K562 (cell line): ENCODE measurements at regions of chr20 and their contacts with region 1.

Region 1: DNA sequence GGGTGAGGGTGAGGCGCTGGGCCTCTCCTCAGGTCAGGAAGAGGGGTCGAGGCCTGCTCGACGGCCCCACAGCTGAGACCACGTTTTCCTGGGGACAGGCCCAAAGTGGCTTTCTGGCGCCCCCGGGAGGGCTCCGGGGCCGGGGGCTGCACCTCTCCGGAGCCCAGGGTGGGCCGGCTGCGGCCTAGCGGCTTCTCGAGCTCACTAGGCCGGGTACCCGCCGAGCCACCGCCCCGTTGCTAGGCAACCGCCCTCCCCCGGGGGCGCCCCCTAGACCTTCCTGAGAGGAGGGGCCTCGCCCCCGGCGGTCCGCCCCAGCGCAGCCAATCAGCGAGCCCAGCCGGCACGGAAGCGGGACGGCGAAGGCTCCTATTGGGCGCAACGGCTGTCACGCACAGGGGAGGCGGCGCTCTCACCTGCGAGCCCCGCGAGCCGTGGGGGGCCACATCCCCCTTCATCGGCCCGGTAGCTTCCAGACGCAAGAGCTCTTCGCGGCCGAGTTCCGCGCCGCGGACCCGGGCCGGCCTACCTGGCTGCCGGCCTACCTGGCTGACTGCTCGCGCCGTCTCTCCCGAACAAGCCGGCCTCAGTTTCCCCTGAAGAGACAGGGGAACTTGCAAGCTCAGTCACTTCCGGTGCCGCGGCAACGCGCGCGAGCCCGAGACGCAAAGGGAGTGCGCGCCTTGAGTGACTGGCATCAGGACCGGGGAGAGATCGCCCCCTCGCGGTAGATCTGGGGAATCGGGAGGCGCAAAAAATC is 831 bp upstream of the BCL2L1 start:
- DNase-seq: peak; percentile 99 to 100 (median 100)
- ATAC-seq: peak; percentile 94
- H3K4me3 ChIP-seq: peak overlapping the region; percentile 88
- H3K27ac ChIP-seq: peak overlapping the region; percentile 92
- H3K4me1 ChIP-seq: peaks cover 5 to 26% of the 10 kb centered on the region in 2 experiments; a peak in 3 of 5 replicates
- H3K27me3 ChIP-seq: no peaks in the 10 kb centered on the region
- CTCF ChIP-seq: peak; percentile 91 to 97 (median 96)
- EP300 ChIP-seq: peak; percentile 31; the same call in 1 of the 2 replicates
- POLR2A ChIP-seq: no peak; the same call in 1 of the 2 replicates
- RAD21 ChIP-seq: peak; percentile 95 to 97

Region 2: GRCh38 chr20:31560094-31560899 is 163.2 kb before region 1 on chr20:
- CTCF ChIA-PET with region 1: interaction called, 5 read pairs
- POLR2A ChIA-PET with region 1: no interaction called
- in situ Hi-C with region 1: no loop called
- intact Hi-C with region 1: loop called (anchors 2 kb)
- DNase-seq: peak; percentile 71 to 89 (median 76)
- ATAC-seq: peak; percentile 79
- H3K4me3 ChIP-seq: no peak overlapping the region
- H3K27ac ChIP-seq: peak overlapping the region; percentile 57
- H3K4me1 ChIP-seq: peaks cover 9 to 25% of the 10 kb centered on the region in 2 experiments; a peak in 4 of 5 replicates
- H3K27me3 ChIP-seq: no peaks in the 10 kb centered on the region
- CTCF ChIP-seq: peak; percentile 91 to 99 (median 95)
- EP300 ChIP-seq: peak; percentile 54
- POLR2A ChIP-seq: no peak
- RAD21 ChIP-seq: peak; percentile 64 to 76

Region 3: DNA sequence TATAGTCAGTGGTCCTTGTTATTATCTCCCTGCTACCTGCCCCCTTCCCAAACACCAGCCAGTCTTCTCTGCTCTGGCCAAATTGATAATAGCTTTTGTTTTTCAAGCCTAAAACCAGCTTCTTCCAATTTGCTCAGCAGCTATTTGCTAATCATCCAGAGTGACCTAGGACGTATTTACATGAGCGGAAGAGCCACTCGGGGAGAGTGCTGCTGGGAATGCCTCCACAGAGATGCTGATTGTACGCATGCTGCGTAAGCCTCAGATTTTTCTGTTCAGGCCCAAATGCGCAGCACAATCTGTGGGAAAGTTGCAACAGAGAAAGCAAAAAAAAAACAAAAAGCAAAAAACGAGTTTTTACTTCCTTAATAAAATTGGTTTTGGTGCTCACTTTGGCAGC is 142.8 kb before region 1 on chr20:
- CTCF ChIA-PET with region 1: no interaction called
- POLR2A ChIA-PET with region 1: no interaction called
- in situ Hi-C with region 1: no loop called
- intact Hi-C with region 1: no loop called
- DNase-seq: no peak
- ATAC-seq: no peak
- H3K4me3 ChIP-seq: no peak overlapping the region
- H3K27ac ChIP-seq: no peak overlapping the region
- H3K4me1 ChIP-seq: peaks cover 0 to 10% of the 10 kb centered on the region in 2 experiments; a peak in 2 of 5 replicates
- H3K27me3 ChIP-seq: no peaks in the 10 kb centered on the region
- CTCF ChIP-seq: no peak
- EP300 ChIP-seq: no peak
- POLR2A ChIP-seq: no peak
- RAD21 ChIP-seq: no peak

Region 4: DNA sequence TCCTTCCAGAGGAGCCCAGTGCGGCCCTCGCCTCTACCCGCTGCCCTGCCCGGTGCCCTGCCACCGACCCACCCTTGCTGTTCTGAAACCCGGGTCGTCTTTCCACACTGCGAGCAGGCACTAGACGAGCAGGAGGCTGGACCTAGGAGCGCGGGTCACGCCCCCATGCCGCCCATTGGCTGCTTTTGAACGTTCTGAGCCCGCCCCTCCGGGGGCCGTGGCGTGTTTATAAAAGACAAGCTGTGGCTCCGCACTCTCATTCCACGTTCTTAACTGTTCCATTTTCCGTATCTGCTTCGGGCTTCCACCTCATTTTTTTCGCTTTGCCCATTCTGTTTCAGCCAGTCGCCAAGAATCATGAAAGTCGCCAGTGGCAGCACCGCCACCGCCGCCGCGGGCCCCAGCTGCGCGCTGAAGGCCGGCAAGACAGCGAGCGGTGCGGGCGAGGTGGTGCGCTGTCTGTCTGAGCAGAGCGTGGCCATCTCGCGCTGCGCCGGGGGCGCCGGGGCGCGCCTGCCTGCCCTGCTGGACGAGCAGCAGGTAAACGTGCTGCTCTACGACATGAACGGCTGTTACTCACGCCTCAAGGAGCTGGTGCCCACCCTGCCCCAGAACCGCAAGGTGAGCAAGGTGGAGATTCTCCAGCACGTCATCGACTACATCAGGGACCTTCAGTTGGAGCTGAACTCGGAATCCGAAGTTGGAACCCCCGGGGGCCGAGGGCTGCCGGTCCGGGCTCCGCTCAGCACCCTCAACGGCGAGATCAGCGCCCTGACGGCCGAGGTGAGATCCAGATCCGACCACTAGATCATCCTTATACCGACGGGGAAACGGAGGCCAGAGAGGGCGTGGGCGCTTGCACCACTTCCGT is 118.2 kb before region 1 on chr20 and contains the start of gene ID1:
- CTCF ChIA-PET with region 1: no interaction called
- POLR2A ChIA-PET with region 1: interaction called, 11 read pairs
- in situ Hi-C with region 1: no loop called
- intact Hi-C with region 1: no loop called
- DNase-seq: peak; percentile 91 to 98 (median 94)
- ATAC-seq: peak; percentile 81
- H3K4me3 ChIP-seq: peak within 1 kb of the TSS; percentile 94
- H3K27ac ChIP-seq: peak within 1 kb of the TSS; percentile 85
- H3K4me1 ChIP-seq: peaks cover 28 to 56% of the 10 kb centered on the region in 2 experiments; a peak in 4 of 5 replicates
- H3K27me3 ChIP-seq: no peaks in the 10 kb centered on the region
- CTCF ChIP-seq: no peak
- EP300 ChIP-seq: peak; percentile 18; the same call in 1 of the 2 replicates
- POLR2A ChIP-seq: peak; percentile 100
- RAD21 ChIP-seq: no peak
- polyA plus RNA-seq, gene ID1: 1.4 to 4.4 TPM

Region 5: DNA sequence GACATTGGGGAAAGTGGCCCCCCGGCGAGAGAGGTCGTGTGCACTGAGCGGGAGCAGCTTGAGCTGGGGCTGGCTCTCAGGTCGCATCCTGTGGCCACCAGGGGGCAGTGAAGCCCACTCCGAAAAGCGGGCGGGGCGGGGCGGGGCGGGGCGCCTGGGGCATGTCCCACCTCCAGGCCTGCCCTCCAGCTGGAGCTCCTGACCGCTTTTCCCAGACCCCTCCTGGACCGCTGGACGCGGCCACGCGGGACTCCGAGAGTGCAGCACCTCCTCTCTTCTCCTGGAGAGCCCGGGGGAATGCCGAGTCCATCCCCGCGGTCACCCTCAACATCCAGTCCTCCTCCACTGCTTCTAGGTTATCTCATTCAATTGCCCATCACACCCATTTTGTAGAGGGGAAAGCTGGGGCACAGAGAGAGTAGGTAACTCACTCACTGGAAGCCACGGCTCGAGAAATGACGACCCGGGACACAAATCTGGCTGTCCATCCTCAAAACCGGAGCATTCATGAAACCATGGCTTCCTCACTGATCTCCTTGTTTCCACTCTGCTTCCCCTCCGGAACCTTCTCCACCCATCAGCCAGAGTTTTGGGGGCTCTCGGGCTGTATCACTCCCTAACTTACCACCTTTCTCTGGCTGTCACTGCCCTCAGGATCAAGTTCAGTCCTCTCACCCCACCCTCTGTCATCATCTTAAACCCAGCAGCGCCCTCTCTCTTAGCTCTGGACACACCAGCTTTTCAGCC is 61.7 kb before region 1 on chr20:
- CTCF ChIA-PET with region 1: interaction called, 66 read pairs
- POLR2A ChIA-PET with region 1: interaction called, 30 read pairs
- in situ Hi-C with region 1: loop called (anchors 10 kb)
- intact Hi-C with region 1: loop called (anchors 1 kb)
- DNase-seq: peak; percentile 90 to 95 (median 92)
- ATAC-seq: peak; percentile 88
- H3K4me3 ChIP-seq: peak overlapping the region; percentile 34
- H3K27ac ChIP-seq: peak overlapping the region; percentile 77
- H3K4me1 ChIP-seq: peaks cover 48 to 51% of the 10 kb centered on the region in 2 experiments
- H3K27me3 ChIP-seq: no peaks in the 10 kb centered on the region
- CTCF ChIP-seq: peak; percentile 66 to 84 (median 74)
- EP300 ChIP-seq: peak; percentile 49; the same call in 1 of the 2 replicates
- POLR2A ChIP-seq: peak; percentile 64
- RAD21 ChIP-seq: peak; percentile 55 to 63

Region 6: DNA sequence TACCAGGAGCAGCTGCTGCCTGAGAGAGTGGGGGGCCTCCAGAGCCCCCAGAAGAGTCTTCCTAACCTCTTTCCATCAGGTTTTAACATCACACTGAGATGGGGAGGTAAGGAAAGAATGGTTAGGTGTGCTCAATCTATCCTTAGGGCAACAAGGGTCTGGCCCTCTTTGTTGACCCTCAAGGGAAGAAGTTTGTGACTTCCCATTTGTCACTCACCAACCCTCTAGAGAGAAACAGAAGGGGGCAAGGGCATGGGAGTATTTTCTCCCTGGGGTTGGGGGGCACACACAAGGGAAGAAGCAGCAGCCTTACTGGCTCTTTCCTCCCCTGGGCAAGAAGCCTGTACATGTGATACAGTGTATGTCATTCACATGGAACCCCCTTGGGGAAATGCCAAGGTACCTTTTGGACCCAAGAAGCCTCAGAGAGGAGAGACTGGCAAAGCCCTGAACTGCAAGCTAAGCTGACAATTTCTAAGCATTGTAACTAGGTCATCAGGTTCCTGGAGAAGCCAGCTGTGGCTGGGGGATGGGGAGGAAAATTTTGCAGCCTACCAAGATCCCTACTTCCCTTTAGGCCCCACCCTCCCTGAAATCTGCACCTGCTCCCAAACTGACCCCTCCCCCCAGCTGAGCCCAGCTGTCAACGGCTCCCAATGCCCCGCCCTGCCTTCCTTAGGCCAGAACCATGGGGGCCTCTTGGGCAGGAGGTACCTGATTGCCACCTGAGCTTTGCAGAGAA is 15.3 kb before region 1 on chr20:
- CTCF ChIA-PET with region 1: no interaction called
- POLR2A ChIA-PET with region 1: interaction called, 8 read pairs
- in situ Hi-C with region 1: no loop called
- intact Hi-C with region 1: loop called (anchors 2 kb)
- DNase-seq: peak; percentile 65 to 85 (median 70)
- ATAC-seq: peak; percentile 62
- H3K4me3 ChIP-seq: no peak overlapping the region
- H3K27ac ChIP-seq: peak overlapping the region; percentile 1; the same call in 2 of the 3 replicates
- H3K4me1 ChIP-seq: peaks cover 50 to 78% of the 10 kb centered on the region in 2 experiments
- H3K27me3 ChIP-seq: no peaks in the 10 kb centered on the region
- CTCF ChIP-seq: no peak
- EP300 ChIP-seq: peak; percentile 34
- POLR2A ChIP-seq: no peak
- RAD21 ChIP-seq: no peak

Region 7: DNA sequence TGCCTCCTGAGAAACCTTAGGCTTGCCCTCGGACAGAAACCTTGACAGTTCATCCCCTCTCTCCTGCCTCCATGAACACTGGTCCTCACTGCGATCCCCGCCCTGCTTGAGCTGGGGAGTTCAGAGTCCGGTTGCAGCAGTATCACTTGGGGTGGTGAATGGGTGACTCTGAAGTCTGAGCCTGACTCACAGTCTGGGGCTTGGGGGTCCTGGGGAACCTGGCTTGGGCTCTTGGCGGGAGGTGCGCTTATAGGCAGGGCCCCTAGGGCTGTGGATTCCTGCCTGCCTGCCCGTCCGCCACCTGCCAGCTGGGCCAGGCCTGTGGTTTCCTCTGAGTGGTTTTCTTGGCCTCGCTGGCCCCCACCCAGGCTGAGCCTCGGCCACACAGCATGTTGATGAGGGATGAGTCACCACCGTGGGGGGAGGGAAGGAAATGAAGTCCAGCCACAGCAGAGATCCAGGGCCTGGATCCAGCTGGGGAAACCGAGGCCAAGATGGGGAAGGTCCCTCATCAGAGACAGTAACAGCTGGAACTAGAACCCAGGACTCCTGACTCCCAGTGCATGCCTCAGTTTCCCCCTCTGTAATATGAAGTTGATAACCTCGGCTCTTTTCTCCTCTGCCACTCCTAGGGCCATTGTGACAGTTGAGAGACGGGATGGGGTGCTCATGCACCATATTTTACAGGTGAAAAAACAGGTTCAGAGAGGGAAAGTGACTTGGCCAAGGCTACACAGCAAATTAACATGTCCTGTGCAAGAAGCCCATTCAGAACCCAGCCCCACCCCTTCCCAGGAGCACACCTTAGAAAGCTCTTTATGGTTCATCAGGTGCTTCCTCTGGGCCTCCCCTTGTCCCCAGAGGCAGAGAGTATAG is 112.7 kb after region 1 on chr20:
- CTCF ChIA-PET with region 1: no interaction called
- POLR2A ChIA-PET with region 1: no interaction called
- in situ Hi-C with region 1: no loop called
- intact Hi-C with region 1: loop called (anchors 5 kb)
- DNase-seq: peak; percentile 87 to 90 (median 88)
- ATAC-seq: peak; percentile 87
- H3K4me3 ChIP-seq: no peak overlapping the region
- H3K27ac ChIP-seq: peak overlapping the region; percentile 49; the same call in 2 of the 3 replicates
- H3K4me1 ChIP-seq: peaks cover 35 to 51% of the 10 kb centered on the region in 2 experiments
- H3K27me3 ChIP-seq: no peaks in the 10 kb centered on the region
- CTCF ChIP-seq: no peak
- EP300 ChIP-seq: peak; percentile 46; the same call in 1 of the 2 replicates
- POLR2A ChIP-seq: no peak
- RAD21 ChIP-seq: no peak

Region 8: DNA sequence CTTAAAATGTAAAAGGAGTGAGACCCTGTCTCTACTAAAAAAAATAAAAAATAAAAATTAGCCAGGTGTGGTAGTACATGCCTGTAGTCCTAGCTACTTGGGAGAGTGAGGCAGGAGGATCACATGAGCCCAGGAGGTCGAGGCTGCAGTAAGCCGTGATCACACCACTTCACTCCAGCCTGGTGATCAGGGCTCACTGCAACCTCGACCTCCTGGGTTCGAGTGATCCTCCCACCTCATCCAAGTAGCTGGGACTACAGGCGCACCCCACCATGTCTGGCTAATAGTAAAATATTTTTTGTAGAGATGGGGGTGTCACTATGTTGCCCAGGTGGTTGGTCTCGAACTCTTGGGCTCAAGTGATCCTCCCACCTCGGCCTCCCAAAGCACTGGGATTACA is 130.0 kb after region 1 on chr20:
- CTCF ChIA-PET with region 1: no interaction called
- POLR2A ChIA-PET with region 1: no interaction called
- in situ Hi-C with region 1: no loop called
- intact Hi-C with region 1: no loop called
- DNase-seq: no peak
- ATAC-seq: no peak
- H3K4me3 ChIP-seq: no peak overlapping the region
- H3K27ac ChIP-seq: no peak overlapping the region
- H3K4me1 ChIP-seq: peaks cover 0 to 13% of the 10 kb centered on the region in 2 experiments; a peak in 3 of 5 replicates
- H3K27me3 ChIP-seq: peaks cover 13 to 57% of the 10 kb centered on the region in 2 experiments
- CTCF ChIP-seq: no peak
- EP300 ChIP-seq: no peak
- POLR2A ChIP-seq: no peak
- RAD21 ChIP-seq: no peak